ENCODE measurements at regions of chr11 and their contacts with region 1.

Region 1: DNA sequence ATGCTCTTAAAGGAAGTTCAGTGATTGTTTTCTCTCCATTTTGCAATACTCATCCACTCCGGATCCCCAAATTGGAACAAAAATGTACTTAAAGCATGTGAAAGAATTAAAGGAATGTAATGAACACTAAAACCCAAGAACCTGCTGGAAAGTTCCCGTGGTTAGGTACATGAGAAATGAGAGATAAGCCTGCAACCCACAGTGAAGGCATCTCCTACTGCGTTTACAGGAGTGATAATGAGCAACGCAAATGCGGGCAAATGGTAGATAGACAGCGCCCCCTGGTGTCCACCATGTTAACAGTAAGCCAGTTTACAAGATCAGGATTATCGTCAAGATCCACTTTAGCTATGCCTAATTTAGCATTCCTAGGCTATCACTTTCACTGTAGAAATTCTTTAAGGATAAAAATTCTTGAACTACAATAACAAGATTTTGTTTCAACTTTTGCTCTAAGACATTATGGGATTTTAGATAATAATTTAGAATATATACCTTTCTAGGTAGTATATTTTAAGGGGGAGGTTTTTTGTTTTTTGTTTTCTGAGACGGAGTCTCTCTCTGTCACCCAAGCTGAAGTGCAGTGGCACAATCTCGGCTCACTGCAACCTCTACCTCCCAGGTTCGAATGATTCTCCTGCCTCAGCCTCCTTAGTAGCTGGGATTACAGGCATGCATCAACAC is 29.9 kb downstream of the ALG9 start:
- DNase-seq: peak; percentile 72 to 84
- H3K4me3 ChIP-seq: no peak overlapping the region
- H3K27ac ChIP-seq: peak overlapping the region; percentile 50
- H3K4me1 ChIP-seq: peaks cover 79% of the 10 kb centered on the region
- H3K27me3 ChIP-seq: no peaks in the 10 kb centered on the region
- CTCF ChIP-seq: peak; percentile 98

Region 2: GRCh38 chr11:111565114-111565720 is 276.3 kb before region 1 on chr11:
- CTCF ChIA-PET with region 1: no interaction called
- POLR2A ChIA-PET with region 1: no interaction called
- intact Hi-C with region 1: loop called (anchors 2 kb)
- DNase-seq: peak; percentile 60 to 74
- H3K4me3 ChIP-seq: no peak overlapping the region
- H3K27ac ChIP-seq: no peak overlapping the region
- H3K4me1 ChIP-seq: peaks cover 28% of the 10 kb centered on the region
- H3K27me3 ChIP-seq: no peaks in the 10 kb centered on the region
- CTCF ChIP-seq: peak; percentile 93

Region 3: GRCh38 chr11:111586388-111586831 is 255.1 kb before region 1 on chr11:
- CTCF ChIA-PET with region 1: no interaction called
- POLR2A ChIA-PET with region 1: no interaction called
- intact Hi-C with region 1: loop called (anchors 5 kb)
- DNase-seq: peak; percentile 21 to 56
- H3K4me3 ChIP-seq: no peak overlapping the region
- H3K27ac ChIP-seq: no peak overlapping the region
- H3K4me1 ChIP-seq: no peaks in the 10 kb centered on the region
- H3K27me3 ChIP-seq: no peaks in the 10 kb centered on the region
- CTCF ChIP-seq: peak; percentile 85

Measured in PC-9 (cell line).